GM12878 (cell line): ENCODE measurements at regions of chr9 and their contacts with region 1.

Region 1: DNA sequence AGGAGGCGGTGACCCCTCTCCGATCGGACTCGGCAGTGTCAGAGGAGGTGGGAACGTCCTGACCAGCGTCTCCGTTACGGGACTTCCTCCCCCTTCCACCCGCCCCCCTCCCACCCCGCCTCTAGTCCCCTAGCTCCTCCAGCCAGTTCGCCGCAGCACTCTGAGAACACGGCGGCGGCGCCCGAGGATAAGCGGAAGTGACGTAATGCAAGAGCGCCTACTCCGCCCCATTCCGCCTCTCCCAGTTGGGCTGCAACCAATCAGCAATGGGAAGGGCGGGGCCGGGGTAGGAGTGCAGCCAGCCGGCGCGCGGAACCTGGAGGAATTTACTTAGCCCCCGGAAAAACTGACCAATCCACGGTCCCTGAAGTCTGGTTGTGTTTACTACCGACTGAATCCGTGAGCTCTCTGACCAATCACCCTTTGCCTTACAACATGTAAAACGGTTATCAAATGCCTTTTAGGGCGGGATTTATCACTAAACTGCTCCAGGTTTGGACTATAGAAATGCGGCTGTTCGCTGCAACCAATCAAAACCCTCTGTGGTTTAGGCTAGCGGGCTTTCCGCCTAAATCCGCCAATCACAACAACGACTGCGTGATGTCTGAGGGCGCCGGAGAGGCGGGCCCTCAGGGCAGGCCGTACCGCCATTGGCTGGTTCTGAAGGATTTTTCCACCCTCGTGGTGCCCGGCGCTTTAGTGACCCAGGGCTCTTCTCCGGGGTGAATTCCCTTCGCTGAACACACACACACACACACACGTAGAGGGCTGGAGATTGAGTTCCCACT is at the start of gene ZBTB5:
- DNase-seq: peak; percentile 100
- ATAC-seq: peak; percentile 85
- H3K4me3 ChIP-seq: peak within 1 kb of the TSS; percentile 84
- H3K27ac ChIP-seq: peak within 1 kb of the TSS; percentile 92
- H3K4me1 ChIP-seq: no peaks in the 10 kb centered on the region
- H3K27me3 ChIP-seq: no peaks in the 10 kb centered on the region
- CTCF ChIP-seq: no peak
- EP300 ChIP-seq: no peak
- POLR2A ChIP-seq: no peak
- RAD21 ChIP-seq: no peak
- polyA plus RNA-seq, gene ZBTB5: 1.4 to 2.5 TPM

Region 2: GRCh38 chr9:37449862-37450632 is 15.4 kb before region 1 on chr9:
- CTCF ChIA-PET with region 1: no interaction called
- POLR2A ChIA-PET with region 1: interaction called, 8 read pairs
- RAD21 ChIA-PET with region 1: interaction called, 8 read pairs
- SMC1A ChIA-PET with region 1: interaction called, 33 read pairs
- in situ Hi-C with region 1: no loop called
- intact Hi-C with region 1: no loop called
- DNase-seq: no peak
- ATAC-seq: no peak
- H3K4me3 ChIP-seq: no peak overlapping the region
- H3K27ac ChIP-seq: no peak overlapping the region
- H3K4me1 ChIP-seq: no peaks in the 10 kb centered on the region; the same call in 1 of the 2 replicates
- H3K27me3 ChIP-seq: no peaks in the 10 kb centered on the region
- CTCF ChIP-seq: no peak
- EP300 ChIP-seq: no peak
- POLR2A ChIP-seq: no peak
- RAD21 ChIP-seq: no peak